ENCODE measurements at regions of chrX and their contacts with region 1.

Region 1: GRCh38 chrX:129931411-129932015 is 25.5 kb downstream of the UTP14A start:
- DNase-seq: peak; percentile 90
- H3K4me3 Mint-ChIP-seq: peak overlapping the region; percentile 79
- H3K27ac Mint-ChIP-seq: peak overlapping the region; percentile 71
- H3K4me1 Mint-ChIP-seq: peaks cover 4% of the 10 kb centered on the region
- H3K27me3 Mint-ChIP-seq: peaks cover 15% of the 10 kb centered on the region

Region 2: DNA sequence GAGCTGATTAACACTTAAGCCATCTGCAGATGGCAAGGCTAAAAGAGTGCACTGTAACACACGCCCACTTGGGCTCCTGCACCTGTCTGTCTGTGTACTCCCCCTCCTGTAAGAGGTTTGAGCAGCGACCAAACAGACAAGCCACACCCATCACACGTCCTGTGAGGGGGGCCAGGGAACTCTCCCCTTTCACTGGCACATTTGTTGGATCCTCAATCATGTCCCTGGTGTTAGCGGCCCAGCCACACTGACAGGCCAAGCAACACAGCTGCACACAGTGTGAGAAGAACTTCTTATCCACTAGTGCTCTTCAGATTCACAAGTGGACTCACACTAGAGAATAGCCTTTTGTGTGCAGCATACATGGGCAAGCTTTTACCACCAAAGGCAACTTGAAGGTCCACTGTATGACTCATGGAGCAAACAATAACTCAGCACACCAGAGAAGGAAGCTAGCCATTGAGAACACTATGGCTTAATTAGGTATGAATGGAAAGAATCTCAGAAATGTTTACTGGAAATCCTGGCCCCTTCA is 54.7 kb before region 1 on chrX:
- intact Hi-C with region 1: no loop called
- DNase-seq: no peak
- H3K4me3 Mint-ChIP-seq: no peak overlapping the region
- H3K27ac Mint-ChIP-seq: no peak overlapping the region
- H3K4me1 Mint-ChIP-seq: no peaks in the 10 kb centered on the region
- H3K27me3 Mint-ChIP-seq: no peaks in the 10 kb centered on the region

Region 3: DNA sequence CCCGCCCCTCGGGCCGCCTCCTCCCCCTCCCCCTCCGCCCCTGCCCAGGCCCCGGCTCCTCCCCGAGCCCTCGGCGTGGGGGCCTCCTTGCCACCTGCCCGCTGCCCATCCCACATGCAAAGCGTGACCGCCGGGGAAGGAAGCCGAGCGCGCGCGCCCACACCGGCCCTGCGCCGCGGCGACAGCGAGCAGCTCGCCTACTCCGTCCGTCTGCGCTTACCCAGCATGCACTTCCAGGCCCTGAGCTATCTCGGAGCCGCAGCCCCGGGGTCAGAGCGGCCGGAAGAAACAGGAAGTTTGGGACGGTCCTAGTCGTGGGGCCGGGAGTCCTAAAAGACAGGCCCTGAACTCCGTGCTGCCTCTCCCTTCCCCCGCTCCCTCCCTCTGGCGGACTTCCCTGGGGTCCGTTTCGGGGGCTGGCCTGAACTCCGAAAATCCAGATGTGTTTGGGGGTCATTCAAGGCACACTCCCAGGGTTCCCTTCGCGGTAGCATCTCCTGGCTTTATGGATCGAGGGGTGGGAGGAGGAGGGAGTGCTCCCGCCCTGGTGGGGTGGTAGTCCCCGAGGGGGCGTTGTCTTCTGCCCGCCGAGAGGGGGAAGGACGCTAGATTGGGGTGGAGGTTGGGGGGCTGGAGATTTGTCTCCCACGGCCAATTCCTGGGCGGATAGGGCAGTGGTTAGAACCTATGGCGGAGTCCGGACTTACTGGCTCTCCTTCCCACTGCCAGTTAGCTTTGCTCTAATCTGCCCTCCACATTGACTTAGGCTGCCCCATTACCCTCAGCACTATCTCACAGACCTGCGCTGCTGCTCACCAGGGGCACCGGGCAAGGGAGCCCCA is 25.9 kb after region 1 on chrX:
- intact Hi-C with region 1: loop called (anchors 2 kb)
- DNase-seq: peak; percentile 85
- H3K4me3 Mint-ChIP-seq: peak overlapping the region; percentile 69
- H3K27ac Mint-ChIP-seq: peak overlapping the region; percentile 51
- H3K4me1 Mint-ChIP-seq: peaks cover 30% of the 10 kb centered on the region
- H3K27me3 Mint-ChIP-seq: peaks cover 6% of the 10 kb centered on the region

Region 4: DNA sequence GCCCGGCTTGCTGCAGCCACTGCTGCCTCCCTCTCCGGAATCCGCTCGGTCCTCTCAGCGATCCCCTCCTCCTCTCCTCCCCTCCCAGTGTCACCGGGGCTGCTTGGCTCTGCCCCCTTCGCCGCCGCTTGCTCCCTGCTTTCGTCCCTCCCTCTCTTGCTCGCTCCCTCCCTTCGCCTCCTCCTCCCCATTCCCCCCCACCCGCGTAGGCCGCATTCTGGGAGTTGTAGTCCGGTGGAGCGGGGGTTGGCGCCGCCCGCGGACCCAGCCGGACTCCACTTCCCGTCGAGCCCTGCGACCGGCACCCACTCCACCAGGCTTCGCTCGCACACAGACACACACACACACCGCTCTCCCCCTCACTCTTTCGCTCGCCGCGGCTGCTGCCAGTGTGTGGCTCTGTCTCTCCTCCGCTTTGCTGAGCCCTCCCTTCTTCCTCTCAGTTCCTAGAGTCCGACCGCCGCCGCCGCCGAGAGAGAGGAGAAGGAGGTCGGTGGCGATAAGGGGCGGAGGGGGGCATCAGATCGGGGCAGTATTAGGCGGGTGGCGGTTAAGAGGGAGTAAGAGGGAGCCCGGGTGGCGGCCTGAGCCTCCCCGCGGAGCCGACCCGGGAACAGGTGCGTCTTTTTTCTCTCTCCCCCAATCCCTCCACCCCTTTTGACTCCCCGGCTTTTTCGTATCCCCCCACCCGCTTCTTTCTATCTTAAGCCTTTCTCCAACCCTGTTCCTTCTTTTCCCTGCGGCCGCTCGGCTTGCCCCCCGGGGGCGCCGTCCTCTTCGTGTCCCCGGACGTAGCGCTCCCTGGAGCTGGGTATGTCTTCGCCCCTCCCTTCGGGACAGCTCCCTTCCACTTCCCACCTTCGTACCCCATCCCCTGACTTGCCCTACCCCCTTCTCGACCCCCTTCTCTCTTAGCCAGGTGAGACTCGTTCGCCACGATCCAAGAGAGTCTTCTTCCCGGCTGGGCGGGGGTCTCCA is 51.0 kb after region 1 on chrX and contains the start of gene BCORL1:
- intact Hi-C with region 1: loop called (anchors 1 kb)
- DNase-seq: peak; percentile 94
- H3K4me3 Mint-ChIP-seq: no peak within 1 kb of the TSS
- H3K27ac Mint-ChIP-seq: peak within 1 kb of the TSS; percentile 78
- H3K4me1 Mint-ChIP-seq: peaks cover 10% of the 10 kb centered on the region
- H3K27me3 Mint-ChIP-seq: peaks cover 24% of the 10 kb centered on the region
- total RNA-seq, gene BCORL1: 8.0 and 9.2 TPM in 2 replicates

Measured in activated CD4-positive, alpha-beta T cell treated with anti-CD3 and anti-CD28 coated beads, Interleukin-2, amount 10 ng/mL, durations not matched to agents 24 days and 14 days (primary cell).